ENCODE measurements at regions of chr1 and their contacts with region 1.

Region 1: DNA sequence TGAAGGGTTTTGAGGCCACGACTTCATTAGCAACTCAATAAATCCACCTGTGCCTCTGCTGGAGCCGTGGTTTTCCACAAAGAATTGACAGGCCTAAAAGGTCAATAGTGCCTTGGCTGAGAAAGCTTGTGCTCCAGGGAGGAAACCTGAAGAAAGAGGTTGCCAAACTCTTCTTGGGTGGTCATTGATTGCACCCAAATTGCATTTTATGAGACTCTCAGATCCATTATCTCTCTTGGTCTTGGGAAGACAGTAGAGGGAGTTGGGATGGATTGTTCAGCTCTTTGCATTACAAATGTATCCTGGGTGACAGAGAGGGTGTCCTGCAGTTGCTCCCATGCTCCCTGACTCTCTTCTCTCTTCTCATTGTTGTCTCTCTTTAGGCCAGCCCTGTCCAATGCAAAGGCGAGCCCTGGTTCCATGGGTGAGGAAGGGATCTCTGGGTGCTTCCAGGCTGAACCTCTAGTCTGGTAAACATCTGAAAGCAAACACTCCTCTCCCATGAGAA is 46.1 kb upstream of the HTR1D start:
- DNase-seq: no peak
- H3K4me3 ChIP-seq: no peak overlapping the region
- H3K27ac ChIP-seq: no peak overlapping the region
- H3K4me1 ChIP-seq: peaks cover 3% of the 10 kb centered on the region
- H3K27me3 ChIP-seq: no peaks in the 10 kb centered on the region
- CTCF ChIP-seq: no peak

Region 2: DNA sequence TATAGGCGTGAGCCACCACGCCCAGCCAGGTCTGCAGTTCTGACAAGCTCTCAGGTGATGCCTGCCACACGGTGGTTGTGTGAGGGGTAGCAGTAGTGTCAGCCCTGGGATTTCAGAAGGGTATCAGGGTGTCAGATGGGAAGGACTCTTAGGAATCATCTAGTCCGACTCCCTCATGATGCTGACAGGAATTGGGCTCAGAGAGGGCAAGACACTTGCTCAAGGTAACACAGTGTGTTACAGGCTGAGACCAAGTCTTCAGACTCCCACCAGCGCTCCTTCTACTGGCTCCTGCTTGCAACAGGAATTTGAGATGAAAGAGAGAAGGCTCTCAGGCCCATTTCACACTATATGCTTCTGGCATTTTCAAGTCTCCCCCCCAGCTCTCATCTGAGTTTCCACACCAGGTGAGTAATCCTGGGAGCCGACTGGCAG is 53.1 kb before region 1 on chr1:
- CTCF ChIA-PET with region 1: no interaction called
- dilution Hi-C with region 1: loop called (anchors 5 kb)
- in situ Hi-C with region 1: loop called in 1 of 2 experiments (anchors 10 kb)
- intact Hi-C with region 1: no loop called
- DNase-seq: peak; percentile 62
- H3K4me3 ChIP-seq: no peak overlapping the region
- H3K27ac ChIP-seq: no peak overlapping the region
- H3K4me1 ChIP-seq: peaks cover 17% of the 10 kb centered on the region
- H3K27me3 ChIP-seq: no peaks in the 10 kb centered on the region
- CTCF ChIP-seq: peak; percentile 12 to 32

Region 3: GRCh38 chr1:23216771-23217420 is 46.5 kb before region 1 on chr1:
- CTCF ChIA-PET with region 1: no interaction called
- dilution Hi-C with region 1: loop called (anchors 5 kb)
- in situ Hi-C with region 1: loop called in 1 of 2 experiments (anchors 10 kb)
- intact Hi-C with region 1: no loop called
- DNase-seq: no peak
- H3K4me3 ChIP-seq: peak overlapping the region; percentile 39 to 50 (median 47)
- H3K27ac ChIP-seq: no peak overlapping the region
- H3K4me1 ChIP-seq: no peaks in the 10 kb centered on the region
- H3K27me3 ChIP-seq: no peaks in the 10 kb centered on the region
- CTCF ChIP-seq: peak; percentile 21 to 54